PC-9 (cell line): ENCODE measurements at regions of chr5 and their contacts with region 1.

Region 1: DNA sequence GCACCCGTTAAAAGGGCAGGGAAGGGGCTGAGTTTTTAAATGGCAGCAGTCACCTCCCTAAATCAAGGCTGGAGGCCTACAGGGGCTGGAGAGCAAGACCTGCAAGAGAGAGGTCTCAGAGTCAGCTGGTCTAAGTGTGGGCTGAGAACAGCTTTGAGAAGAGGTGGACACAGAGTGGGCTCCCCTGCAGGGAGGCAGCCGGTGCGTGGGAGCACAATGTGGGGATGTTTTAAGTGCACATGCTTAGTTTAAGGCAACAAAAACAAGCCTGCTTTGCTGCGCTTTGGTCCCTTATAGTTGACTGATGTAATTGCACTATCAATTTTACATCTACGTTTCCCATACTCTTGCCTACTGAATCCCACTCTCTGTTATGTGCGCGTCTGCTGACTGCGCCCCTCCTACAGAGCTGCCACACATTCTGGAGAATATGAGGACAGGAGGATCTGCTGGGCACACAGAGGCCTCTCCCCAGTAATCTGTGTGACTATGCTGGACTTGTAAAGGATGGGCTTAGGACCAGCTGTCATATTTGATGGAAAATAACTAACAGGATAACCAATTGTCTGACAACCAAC is 62.0 kb upstream of the ICE1 start:
- DNase-seq: no peak
- H3K4me3 ChIP-seq: no peak overlapping the region
- H3K27ac ChIP-seq: no peak overlapping the region
- H3K4me1 ChIP-seq: peaks cover 9% of the 10 kb centered on the region
- H3K27me3 ChIP-seq: no peaks in the 10 kb centered on the region
- CTCF ChIP-seq: no peak

Region 2: GRCh38 chr5:5447361-5447760 is 86.9 kb after region 1 on chr5:
- CTCF ChIA-PET with region 1: no interaction called
- POLR2A ChIA-PET with region 1: no interaction called
- intact Hi-C with region 1: no loop called
- DNase-seq: no peak
- H3K4me3 ChIP-seq: no peak overlapping the region
- H3K27ac ChIP-seq: no peak overlapping the region
- H3K4me1 ChIP-seq: no peaks in the 10 kb centered on the region
- H3K27me3 ChIP-seq: no peaks in the 10 kb centered on the region
- CTCF ChIP-seq: no peak

Region 3: GRCh38 chr5:5708367-5708919 is 348.0 kb after region 1 on chr5:
- CTCF ChIA-PET with region 1: no interaction called
- POLR2A ChIA-PET with region 1: interaction called, 13 read pairs
- intact Hi-C with region 1: no loop called
- DNase-seq: no peak
- H3K4me3 ChIP-seq: no peak overlapping the region
- H3K27ac ChIP-seq: no peak overlapping the region
- H3K4me1 ChIP-seq: no peaks in the 10 kb centered on the region
- H3K27me3 ChIP-seq: peaks cover 5% of the 10 kb centered on the region; the same call in 1 of the 2 replicates
- CTCF ChIP-seq: no peak